ENCODE measurements at regions of chr10 and their contacts with region 1.

Region 1: GRCh38 chr10:33136271-33136670 is 178.2 kb upstream of the ITGB1 start:
- DNase-seq: no peak
- ATAC-seq: no peak
- H3K4me3 Mint-ChIP-seq: peak overlapping the region in 3 of 10 donors; percentile 29 to 71 (median 43)
- H3K27ac Mint-ChIP-seq: peak overlapping the region in 9 of 10 donors; percentile 76 to 99 (median 97)
- H3K4me1 Mint-ChIP-seq: peaks cover 28 to 90% (median 72%) of the 10 kb centered on the region in 4 donors
- H3K27me3 Mint-ChIP-seq: peaks cover 0 to 1% (median 0%) of the 10 kb centered on the region in 5 donors

Region 2: DNA sequence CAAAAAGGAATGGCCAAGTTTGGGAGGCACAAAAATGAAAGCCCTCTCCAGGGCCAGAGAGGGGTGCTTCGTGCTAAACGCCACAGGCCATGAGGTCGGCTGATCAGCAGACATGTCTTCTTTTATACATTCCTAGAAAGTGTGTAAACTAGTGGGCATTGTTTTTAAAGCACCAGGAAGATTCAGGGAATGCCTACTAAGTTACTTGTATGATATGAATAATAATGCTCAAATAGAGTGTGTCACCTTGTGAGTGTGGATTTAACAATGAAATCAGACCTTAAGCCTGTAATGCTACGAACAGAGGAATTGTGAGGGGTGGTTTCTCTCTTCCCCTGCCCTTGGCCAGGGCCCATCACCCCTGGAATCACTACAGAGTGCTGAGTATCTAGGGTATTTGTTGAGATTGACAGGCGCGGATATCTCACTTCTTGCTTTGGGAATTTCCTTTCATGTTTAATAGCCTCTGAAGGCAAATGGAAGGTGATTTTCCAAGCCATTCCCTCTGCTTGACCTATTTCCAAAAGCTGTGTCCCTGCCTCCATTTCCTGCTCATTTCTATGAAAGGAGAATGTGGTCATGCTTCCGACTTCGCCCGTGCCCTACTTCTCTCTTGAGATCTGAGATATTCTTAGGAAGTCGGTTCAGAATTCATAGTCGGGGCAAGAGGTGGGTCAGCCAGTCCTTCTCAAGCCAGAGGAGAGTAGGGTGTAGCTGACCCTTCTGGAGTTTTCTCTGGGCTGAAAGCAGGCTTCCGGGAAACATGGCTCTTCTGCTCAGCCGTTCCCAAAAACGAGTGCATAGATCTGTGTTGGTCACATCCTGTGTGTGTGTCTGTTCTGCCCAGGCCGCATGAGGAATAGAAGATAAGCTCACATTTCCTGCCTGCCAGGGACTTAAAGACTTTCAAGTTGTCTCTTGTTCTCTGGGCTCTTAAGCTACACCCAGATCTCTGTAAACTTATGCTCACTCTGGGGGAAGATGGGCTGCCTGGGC is 10.5 kb before region 1 on chr10:
- POLR2A ChIA-PET with region 1: interaction called, 51 read pairs
- DNase-seq: peak in 5 of 10 donors; percentile 12 to 57 (median 51)
- ATAC-seq: peak; percentile 88 to 95
- H3K4me3 Mint-ChIP-seq: peak overlapping the region; percentile 17 to 80 (median 50)
- H3K27ac Mint-ChIP-seq: peak overlapping the region; percentile 83 to 97 (median 90)
- H3K4me1 Mint-ChIP-seq: peaks cover 23 to 71% (median 56%) of the 10 kb centered on the region in 4 donors
- H3K27me3 Mint-ChIP-seq: no peaks in the 10 kb centered on the region

Region 3: DNA sequence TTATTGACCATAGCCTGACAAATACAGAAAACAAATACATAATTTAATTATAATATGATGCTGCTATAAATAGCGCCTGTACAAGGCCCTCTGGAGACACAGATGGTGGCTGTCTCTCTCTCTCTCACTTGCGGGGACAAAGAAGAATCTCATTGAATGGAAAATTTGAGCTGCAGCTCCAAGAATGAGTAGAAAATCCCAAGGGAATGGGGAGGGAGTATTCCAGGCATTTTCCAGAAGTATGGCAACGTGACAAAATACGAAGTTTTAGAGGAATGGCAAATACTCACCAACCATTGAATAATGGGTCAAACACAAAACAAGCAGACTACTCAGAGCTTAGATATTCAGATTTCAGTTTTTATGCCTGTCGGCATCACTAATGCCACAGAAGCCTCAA is 18.3 kb after region 1 on chr10:
- POLR2A ChIA-PET with region 1: interaction called, 14 read pairs
- DNase-seq: no peak
- ATAC-seq: no peak
- H3K4me3 Mint-ChIP-seq: no peak overlapping the region
- H3K27ac Mint-ChIP-seq: peak overlapping the region in 4 of 10 donors; percentile 12 to 66 (median 52)
- H3K4me1 Mint-ChIP-seq: peaks cover 13 to 47% (median 37%) of the 10 kb centered on the region in 4 donors
- H3K27me3 Mint-ChIP-seq: peaks cover 0 to 2% (median 0%) of the 10 kb centered on the region in 5 donors

Measured in naive thymus-derived CD8-positive, alpha-beta T cell (primary cell).